Activated CD8-positive, alpha-beta T cell treated with anti-CD3 and anti-CD28 coated beads, Interleukin-2, amount 10 ng/mL, durations not matched to agents 7 days and 5 days (primary cell): ENCODE measurements at regions of chr9 and their contacts with region 1.

Region 1: DNA sequence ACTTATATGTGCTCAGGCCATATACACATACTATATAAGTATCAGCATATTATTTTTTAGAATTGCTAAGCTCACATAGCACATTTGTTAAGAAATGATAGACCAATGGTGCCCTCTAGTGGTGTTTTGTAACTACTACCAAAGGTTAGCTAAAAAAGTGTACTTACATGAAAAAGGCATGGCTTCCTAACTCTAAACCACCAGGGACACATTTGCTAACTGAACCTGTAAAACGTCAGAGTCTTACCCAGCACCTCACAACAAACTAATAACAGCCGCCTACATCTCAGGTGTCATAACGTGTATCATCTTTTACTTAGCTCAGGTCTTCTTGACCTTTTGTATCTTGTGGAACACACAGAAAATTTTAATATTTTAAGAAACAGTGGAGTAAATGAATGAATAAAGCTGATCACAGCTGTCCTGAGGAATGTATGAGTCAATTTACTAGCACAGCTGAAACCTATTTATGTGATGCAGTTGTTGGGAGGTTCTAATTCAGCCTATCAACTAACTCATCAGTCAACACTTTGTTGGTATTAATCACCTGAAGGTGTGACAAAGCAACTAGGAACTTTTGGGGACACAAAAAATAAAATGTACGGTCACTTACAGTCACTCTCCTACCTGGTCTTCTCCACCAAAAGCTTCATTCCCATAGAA is 72.9 kb downstream of the BAAT start:
- DNase-seq: peak; percentile 33
- ATAC-seq: peak; percentile 47
- H3K4me3 Mint-ChIP-seq: no peak overlapping the region
- H3K27ac Mint-ChIP-seq: no peak overlapping the region
- H3K4me1 Mint-ChIP-seq: no peaks in the 10 kb centered on the region
- H3K27me3 Mint-ChIP-seq: peaks cover 5% of the 10 kb centered on the region

Region 2: DNA sequence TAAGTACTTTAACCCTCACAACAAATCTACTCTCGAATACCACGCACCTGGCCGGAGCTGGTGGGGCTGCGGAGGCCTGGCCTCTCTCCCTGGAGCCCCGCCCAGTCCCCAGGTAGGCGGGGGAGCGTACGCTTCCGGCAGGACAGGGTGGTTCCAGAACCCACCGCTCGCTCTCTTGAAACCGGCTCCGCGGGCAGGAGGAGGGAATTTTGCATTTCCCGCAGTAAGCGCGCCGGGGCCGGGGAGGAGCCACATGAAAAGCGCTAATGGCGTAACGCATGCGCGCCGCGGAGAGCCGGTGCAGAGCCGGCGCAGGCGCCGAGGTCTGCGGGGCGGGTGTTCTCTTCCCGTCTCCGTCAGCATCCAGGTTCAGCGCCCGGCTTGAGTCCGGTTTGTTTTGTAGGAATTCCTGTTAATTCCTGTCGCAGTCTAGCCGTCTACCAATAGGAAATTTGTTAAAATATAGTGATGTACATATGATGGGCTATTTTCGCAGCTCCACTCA is 713.2 kb before region 1 on chr9:
- CTCF ChIA-PET with region 1: interaction called, 56 read pairs
- POLR2A ChIA-PET with region 1: no interaction called
- DNase-seq: peak; percentile 79
- ATAC-seq: peak; percentile 88
- H3K4me3 Mint-ChIP-seq: peak overlapping the region; percentile 75
- H3K27ac Mint-ChIP-seq: no peak overlapping the region
- H3K4me1 Mint-ChIP-seq: peaks cover 16% of the 10 kb centered on the region
- H3K27me3 Mint-ChIP-seq: peaks cover 11% of the 10 kb centered on the region

Region 3: GRCh38 chr9:100714372-100715099 is 597.4 kb before region 1 on chr9:
- CTCF ChIA-PET with region 1: interaction called, 28 read pairs
- POLR2A ChIA-PET with region 1: no interaction called
- DNase-seq: peak; percentile 68
- ATAC-seq: peak; percentile 44
- H3K4me3 Mint-ChIP-seq: no peak overlapping the region
- H3K27ac Mint-ChIP-seq: no peak overlapping the region
- H3K4me1 Mint-ChIP-seq: no peaks in the 10 kb centered on the region
- H3K27me3 Mint-ChIP-seq: no peaks in the 10 kb centered on the region

Region 4: GRCh38 chr9:101618698-101619097 is 306.8 kb after region 1 on chr9:
- CTCF ChIA-PET with region 1: no interaction called
- POLR2A ChIA-PET with region 1: no interaction called
- DNase-seq: no peak
- ATAC-seq: no peak
- H3K4me3 Mint-ChIP-seq: no peak overlapping the region
- H3K27ac Mint-ChIP-seq: no peak overlapping the region
- H3K4me1 Mint-ChIP-seq: no peaks in the 10 kb centered on the region
- H3K27me3 Mint-ChIP-seq: no peaks in the 10 kb centered on the region